HCT116 (cell line): ENCODE measurements at regions of chr4 and their contacts with region 1.

Region 1: GRCh38 chr4:76179398-76180318 is 31.5 kb upstream of the NUP54 start:
- DNase-seq: peak; percentile 60
- ATAC-seq: peak; percentile 99
- H3K4me3 ChIP-seq: no peak overlapping the region
- H3K27ac ChIP-seq: no peak overlapping the region
- H3K4me1 ChIP-seq: no peaks in the 10 kb centered on the region
- H3K27me3 ChIP-seq: no peaks in the 10 kb centered on the region
- CTCF ChIP-seq: peak; percentile 74 to 93 (median 86)
- POLR2A ChIP-seq: no peak
- RAD21 ChIP-seq: peak; percentile 94

Region 2: DNA sequence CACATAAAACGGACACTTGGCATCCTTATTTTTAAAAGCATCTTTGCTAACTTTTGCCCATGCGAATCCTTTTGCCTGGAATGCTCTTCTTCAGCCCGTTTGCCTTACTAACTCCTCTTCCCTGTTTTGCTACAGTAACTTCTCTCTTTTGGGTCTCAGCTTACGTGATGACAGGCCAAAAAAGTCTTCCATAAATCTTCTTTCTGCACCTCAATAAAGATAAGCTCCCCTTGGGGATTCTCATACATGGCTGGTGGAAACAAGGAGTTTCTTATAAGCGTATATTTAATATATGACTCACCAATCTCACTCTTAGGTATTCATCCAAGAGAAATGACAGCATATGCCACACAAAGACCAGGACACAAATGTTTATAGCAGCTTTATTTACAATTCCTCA is 858.2 kb before region 1 on chr4:
- CTCF ChIA-PET with region 1: no interaction called
- POLR2A ChIA-PET with region 1: no interaction called
- RAD21 ChIA-PET with region 1: no interaction called
- intact Hi-C with region 1: no loop called
- DNase-seq: no peak
- ATAC-seq: no peak
- H3K4me3 ChIP-seq: no peak overlapping the region
- H3K27ac ChIP-seq: no peak overlapping the region
- H3K4me1 ChIP-seq: no peaks in the 10 kb centered on the region
- H3K27me3 ChIP-seq: peaks cover 8% of the 10 kb centered on the region; the same call in 1 of the 2 replicates
- CTCF ChIP-seq: no peak
- POLR2A ChIP-seq: no peak
- RAD21 ChIP-seq: no peak

Region 3: GRCh38 chr4:76166480-76166879 is 13.2 kb before region 1 on chr4:
- CTCF ChIA-PET with region 1: interaction called, 11 read pairs
- POLR2A ChIA-PET with region 1: no interaction called
- RAD21 ChIA-PET with region 1: no interaction called
- intact Hi-C with region 1: no loop called
- DNase-seq: no peak
- ATAC-seq: no peak
- H3K4me3 ChIP-seq: no peak overlapping the region
- H3K27ac ChIP-seq: no peak overlapping the region
- H3K4me1 ChIP-seq: no peaks in the 10 kb centered on the region
- H3K27me3 ChIP-seq: no peaks in the 10 kb centered on the region
- CTCF ChIP-seq: no peak
- POLR2A ChIP-seq: no peak
- RAD21 ChIP-seq: no peak

Region 4: DNA sequence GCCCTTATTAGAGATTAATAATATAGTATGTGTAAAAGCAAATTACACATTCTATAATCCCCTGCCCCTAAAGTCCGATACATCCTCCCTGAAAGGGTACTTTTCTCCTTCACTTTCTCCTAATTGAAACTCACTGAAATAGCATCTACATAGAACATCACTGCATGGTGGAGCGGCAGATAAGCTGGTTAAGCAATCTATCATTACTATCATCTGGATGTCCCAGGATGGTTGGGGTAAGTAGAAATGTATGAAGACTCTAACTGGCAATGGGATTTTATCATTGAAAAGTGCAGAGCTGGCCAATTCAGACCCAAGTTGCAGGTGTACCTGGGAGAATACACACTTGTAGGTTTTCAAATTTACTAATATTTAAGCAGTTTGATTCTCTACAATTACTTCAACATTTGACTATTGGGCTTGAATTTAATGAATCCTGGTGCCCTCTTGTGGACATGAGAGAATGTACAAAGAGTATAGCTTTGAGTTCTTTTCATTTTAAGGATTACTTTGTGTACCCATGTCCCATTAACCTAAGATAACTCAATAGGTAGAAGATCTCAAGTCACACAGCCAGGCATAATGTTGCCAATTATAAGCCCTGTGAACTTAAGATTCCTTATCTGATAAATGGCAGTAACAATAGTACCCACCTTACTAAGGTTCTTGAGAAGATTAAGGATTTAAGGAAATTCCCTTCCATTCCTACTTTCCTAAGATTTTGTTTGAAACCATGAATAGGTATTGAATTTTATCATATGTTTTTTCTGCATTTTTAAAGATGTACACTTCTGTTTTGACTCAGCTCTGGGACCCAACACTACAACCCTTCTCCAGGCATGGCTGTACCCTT is 325.2 kb after region 1 on chr4:
- CTCF ChIA-PET with region 1: interaction called, 17 read pairs
- POLR2A ChIA-PET with region 1: no interaction called
- RAD21 ChIA-PET with region 1: no interaction called
- intact Hi-C with region 1: loop called (anchors 2 kb)
- DNase-seq: peak; percentile 57
- ATAC-seq: peak; percentile 81
- H3K4me3 ChIP-seq: no peak overlapping the region
- H3K27ac ChIP-seq: no peak overlapping the region
- H3K4me1 ChIP-seq: no peaks in the 10 kb centered on the region
- H3K27me3 ChIP-seq: no peaks in the 10 kb centered on the region
- CTCF ChIP-seq: peak; percentile 51 to 79 (median 74); a peak in 5 of 6 replicates
- POLR2A ChIP-seq: no peak
- RAD21 ChIP-seq: peak; percentile 89